Psoas muscle (tissue), 8 donors: ENCODE measurements at regions of chr16 and their contacts with region 1.

Region 1: DNA sequence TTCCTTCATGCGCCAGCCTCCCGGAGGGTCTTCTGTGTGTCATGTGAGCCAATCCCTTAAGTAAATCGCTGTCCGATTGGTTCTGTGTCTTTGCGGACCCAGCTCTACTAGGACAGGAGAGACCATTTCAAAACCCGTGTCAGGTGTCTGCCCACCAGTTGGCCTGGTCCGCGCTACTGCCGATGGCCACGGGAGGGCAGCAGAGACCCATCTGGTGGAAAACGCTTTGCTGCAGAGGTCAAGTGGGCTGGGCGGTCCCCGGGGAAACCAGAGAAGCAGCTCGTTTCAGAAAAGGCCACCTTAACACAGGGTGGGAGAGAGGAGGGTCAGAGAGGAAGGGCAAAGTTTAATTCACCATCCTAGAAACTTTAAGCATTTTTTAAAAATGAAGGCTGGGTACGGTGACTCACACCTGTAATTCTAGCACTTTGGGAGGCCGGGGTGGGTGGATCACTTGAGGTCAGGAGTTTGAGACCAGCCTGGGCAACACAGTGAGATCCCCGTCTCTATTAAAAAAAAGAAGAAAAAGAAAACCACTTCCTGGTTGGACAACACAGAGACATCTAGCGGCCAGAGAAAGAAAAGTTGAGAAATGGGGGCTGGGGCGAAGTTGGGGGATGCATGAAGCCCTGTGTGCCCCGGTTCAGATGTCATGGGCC is 2.8 kb upstream of the CIBAR2 start:
- DNase-seq: peak; percentile 90 to 95
- ATAC-seq: peak; percentile 92 to 97 (median 96)
- H3K4me3 ChIP-seq: peak overlapping the region; percentile 25
- H3K27ac ChIP-seq: peak overlapping the region; percentile 50
- H3K4me1 ChIP-seq: peaks cover 8% of the 10 kb centered on the region
- H3K27me3 ChIP-seq: no peaks in the 10 kb centered on the region
- CTCF ChIP-seq: peak; percentile 98

Region 2: DNA sequence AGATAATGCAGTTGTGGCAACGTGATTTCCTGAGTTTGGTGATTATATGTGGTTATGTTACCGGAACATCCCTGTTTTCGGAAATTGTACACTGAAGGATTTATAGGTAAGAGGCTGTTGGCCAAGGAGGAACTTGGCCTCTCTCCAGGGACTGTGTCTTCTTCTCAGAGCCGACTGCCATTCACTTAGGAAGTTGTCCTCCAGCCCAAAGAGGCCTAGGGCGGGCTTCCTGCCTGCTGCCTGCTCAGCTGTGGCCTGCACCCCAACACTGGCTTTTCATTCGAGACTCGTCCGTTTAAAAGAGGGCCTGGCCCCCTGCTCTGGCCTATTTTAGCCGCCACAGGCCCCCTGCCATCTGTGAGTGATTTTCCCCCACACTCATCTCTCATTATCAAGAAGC is 168.0 kb before region 1 on chr16:
- intact Hi-C with region 1: no loop called
- DNase-seq: no peak
- ATAC-seq: peak in 2 of 4 donors; percentile 26 to 60
- H3K4me3 ChIP-seq: no peak overlapping the region
- H3K27ac ChIP-seq: no peak overlapping the region
- H3K4me1 ChIP-seq: no peaks in the 10 kb centered on the region
- H3K27me3 ChIP-seq: no peaks in the 10 kb centered on the region
- CTCF ChIP-seq: no peak

Region 3: GRCh38 chr16:85072947-85073346 is 42.1 kb before region 1 on chr16:
- intact Hi-C with region 1: no loop called
- DNase-seq: peak; percentile 72 to 88
- ATAC-seq: peak; percentile 87 to 99 (median 98)
- H3K4me3 ChIP-seq: no peak overlapping the region
- H3K27ac ChIP-seq: peak overlapping the region; percentile 7
- H3K4me1 ChIP-seq: peaks cover 13% of the 10 kb centered on the region
- H3K27me3 ChIP-seq: no peaks in the 10 kb centered on the region
- CTCF ChIP-seq: no peak

Region 4: DNA sequence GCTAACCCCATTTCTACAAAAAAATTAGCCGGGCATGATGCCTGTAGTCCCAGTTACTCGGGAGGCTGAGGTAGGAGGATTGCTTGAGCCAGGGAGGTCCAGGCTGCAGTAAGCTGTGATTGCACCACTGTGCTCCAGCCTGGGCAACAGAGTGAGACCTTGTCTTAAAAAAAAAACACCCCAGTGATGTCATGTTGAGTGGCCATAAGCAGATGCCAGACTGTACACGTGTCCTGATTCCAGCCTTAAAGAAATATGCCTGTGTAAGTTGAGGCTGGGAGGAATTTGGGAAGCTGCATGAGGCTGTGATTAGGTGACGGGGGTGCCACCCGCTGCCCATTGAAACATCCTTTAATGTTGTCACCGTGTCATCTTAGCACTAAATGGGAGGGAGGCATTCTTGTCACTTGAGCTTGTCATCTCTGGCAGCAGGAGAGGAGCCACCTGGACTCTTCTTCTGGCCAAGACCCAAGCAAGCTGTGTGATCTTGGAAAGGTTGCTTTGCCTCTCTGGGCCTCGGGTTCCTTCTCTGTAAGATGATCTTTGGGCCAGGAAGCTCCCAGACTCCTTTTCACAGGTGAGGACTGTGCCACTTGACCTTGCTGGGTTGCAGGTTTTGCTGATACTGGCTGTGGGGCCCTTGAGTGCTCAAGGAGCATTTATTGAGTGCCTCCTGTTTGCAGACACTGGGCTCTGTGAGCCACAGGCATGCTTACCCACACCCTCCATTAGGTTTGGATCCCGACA is 95.6 kb after region 1 on chr16:
- intact Hi-C with region 1: loop called in 1 of 2 experiments (anchors 5 kb)
- DNase-seq: no peak
- ATAC-seq: peak in 3 of 4 donors; percentile 24 to 47 (median 29)
- H3K4me3 ChIP-seq: no peak overlapping the region
- H3K27ac ChIP-seq: peak overlapping the region; percentile 23
- H3K4me1 ChIP-seq: peaks cover 84% of the 10 kb centered on the region
- H3K27me3 ChIP-seq: no peaks in the 10 kb centered on the region
- CTCF ChIP-seq: no peak

Region 5: GRCh38 chr16:85220125-85220839 is 105.2 kb after region 1 on chr16:
- intact Hi-C with region 1: loop called in 1 of 2 experiments (anchors 10 kb)
- DNase-seq: peak; percentile 84 to 93
- ATAC-seq: peak; percentile 82 to 94 (median 88)
- H3K4me3 ChIP-seq: peak overlapping the region; percentile 31
- H3K27ac ChIP-seq: peak overlapping the region; percentile 64
- H3K4me1 ChIP-seq: peaks cover 18% of the 10 kb centered on the region
- H3K27me3 ChIP-seq: no peaks in the 10 kb centered on the region
- CTCF ChIP-seq: no peak